Transverse colon (tissue), 4 donors: ENCODE measurements at regions of chr16 and their contacts with region 1.

Region 1: GRCh38 chr16:89217388-89218191 is at the start of gene ZNF778:
- DNase-seq: peak; percentile 86
- H3K4me3 ChIP-seq: peak within 1 kb of the TSS; percentile 42 to 90 (median 76)
- H3K27ac ChIP-seq: peak within 1 kb of the TSS; percentile 95 to 98 (median 97)
- H3K4me1 ChIP-seq: peaks cover 11 to 34% (median 23%) of the 10 kb centered on the region in 4 donors
- H3K27me3 ChIP-seq: no peaks in the 10 kb centered on the region
- CTCF ChIP-seq: peak in 2 of 5 experiments; percentile 1 to 35
- EP300 ChIP-seq: no peak
- POLR2A ChIP-seq: peak; percentile 84
- total RNA-seq, gene ZNF778: 9.3 to 89.0 (median 13.4) TPM

Region 2: DNA sequence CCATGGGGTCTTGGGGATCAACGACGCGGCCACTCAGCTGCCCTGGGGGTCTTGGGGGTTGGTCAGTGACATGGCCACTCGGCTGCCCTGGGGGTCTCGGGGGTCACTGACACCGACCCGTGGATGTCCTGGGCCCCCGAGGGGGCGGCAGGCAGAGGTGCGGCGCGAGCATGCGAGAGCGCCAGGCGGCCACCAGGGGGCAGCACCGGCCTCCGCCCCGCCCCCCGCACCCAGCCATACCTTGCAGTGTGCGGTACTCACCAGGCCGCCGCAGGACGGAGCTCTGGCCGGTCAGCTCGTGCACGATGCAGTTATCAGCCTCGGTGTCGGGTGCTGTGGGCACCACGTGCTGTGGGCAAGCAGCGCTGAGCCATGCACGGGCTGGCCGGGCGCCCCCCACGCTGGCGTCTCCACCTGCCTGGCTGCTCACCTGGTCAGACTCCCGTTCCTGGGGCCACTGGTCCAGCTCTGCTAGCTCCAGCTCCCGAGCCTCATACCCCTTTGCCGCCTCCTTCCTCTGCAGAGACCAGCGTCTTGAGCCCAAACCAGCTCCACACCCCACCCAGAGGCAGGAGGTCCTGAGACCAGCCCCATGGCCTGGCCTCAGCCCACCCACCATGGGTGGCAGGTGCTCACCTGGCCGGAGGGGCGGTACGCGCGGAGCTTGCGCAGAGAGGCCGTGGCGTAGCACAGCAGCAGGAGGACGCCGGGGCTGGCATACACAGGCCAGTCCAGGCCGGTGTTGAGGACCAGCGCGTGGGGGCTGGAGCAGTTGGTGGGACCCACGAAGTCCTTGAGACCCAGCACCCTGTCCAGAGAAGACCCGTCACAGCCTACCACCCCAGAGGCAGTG is 480.1 kb before region 1 on chr16:
- in situ Hi-C with region 1: loop called in 1 of 4 experiments (anchors 25 kb)
- intact Hi-C with region 1: no loop called
- DNase-seq: peak; percentile 78
- H3K4me3 ChIP-seq: no peak overlapping the region
- H3K27ac ChIP-seq: peak overlapping the region in 1 of 4 donors; percentile 30
- H3K4me1 ChIP-seq: peaks cover 0 to 6% (median 3%) of the 10 kb centered on the region in 4 donors
- H3K27me3 ChIP-seq: no peaks in the 10 kb centered on the region
- CTCF ChIP-seq: peak; percentile 98 to 100 (median 99)
- EP300 ChIP-seq: no peak
- POLR2A ChIP-seq: no peak

Region 3: GRCh38 chr16:88811769-88812512 is 405.6 kb before region 1 on chr16 and contains the start of gene APRT:
- in situ Hi-C with region 1: loop called in 1 of 4 experiments (anchors 25 kb)
- intact Hi-C with region 1: no loop called
- DNase-seq: peak; percentile 97
- H3K4me3 ChIP-seq: peak within 1 kb of the TSS; percentile 64 to 94 (median 83)
- H3K27ac ChIP-seq: peak within 1 kb of the TSS; percentile 97 to 99 (median 97)
- H3K4me1 ChIP-seq: peaks cover 12 to 37% (median 32%) of the 10 kb centered on the region in 4 donors
- H3K27me3 ChIP-seq: no peaks in the 10 kb centered on the region
- CTCF ChIP-seq: peak in 4 of 5 experiments; percentile 20 to 51 (median 27)
- EP300 ChIP-seq: no peak
- POLR2A ChIP-seq: peak; percentile 80
- total RNA-seq, gene APRT: 81.6 to 221 (median 149) TPM

Region 4: DNA sequence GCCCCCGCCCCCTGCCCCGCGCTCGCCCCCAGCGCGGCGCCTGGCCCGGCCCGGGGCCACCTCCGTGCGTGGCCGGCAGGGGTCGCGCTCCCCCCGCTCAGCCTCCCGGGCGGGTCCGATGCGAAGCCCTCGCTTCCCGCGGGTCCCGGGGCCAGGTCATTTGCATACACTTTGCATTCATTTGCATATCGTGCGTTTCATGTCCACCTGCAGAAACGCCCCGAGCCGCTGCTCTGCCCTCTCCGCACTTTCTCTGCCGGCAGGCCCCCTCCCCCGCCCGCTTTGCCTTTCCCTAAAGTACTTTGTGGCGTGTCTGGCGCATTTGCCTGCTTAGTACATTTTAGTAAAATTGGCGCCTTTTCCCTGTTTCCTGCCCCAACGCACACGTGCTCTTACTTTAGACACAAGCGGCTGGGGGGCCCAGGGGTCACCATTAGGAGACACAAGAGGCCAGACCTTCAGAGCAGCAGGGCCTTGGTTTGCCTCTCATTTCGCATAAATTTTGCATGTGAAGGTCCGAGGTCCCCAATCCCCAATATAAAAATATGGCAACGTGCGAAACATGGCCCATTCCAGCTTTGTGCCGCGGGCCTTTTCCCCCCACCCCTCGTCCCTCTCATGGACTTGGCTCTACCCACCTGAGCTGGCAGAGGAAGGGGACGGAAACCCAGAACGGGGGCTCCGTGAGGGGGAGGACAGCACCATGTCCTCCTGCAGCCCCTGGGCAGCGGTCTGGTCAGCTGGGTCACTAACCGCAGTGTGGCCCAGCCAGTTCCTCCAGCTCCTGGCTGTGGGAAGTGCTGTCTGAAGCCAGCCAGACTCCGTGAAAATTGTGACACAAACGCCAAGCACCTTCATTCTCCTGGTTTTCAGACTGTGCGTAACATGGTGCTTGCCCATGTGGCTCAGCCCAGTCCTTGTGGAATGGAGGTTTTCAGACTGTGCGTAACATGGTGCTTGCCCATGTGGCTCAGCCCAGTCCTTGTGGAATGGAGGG is 275.4 kb before region 1 on chr16:
- in situ Hi-C with region 1: loop called in 1 of 4 experiments (anchors 25 kb)
- intact Hi-C with region 1: loop called (anchors 5 kb)
- DNase-seq: peak; percentile 69
- H3K4me3 ChIP-seq: peak overlapping the region in 3 of 4 donors; percentile 33 to 52 (median 45)
- H3K27ac ChIP-seq: peak overlapping the region in 1 of 4 donors; percentile 46
- H3K4me1 ChIP-seq: peaks cover 5 to 36% (median 25%) of the 10 kb centered on the region in 4 donors
- H3K27me3 ChIP-seq: peaks cover 75% of the 10 kb centered on the region
- CTCF ChIP-seq: peak; percentile 47 to 70 (median 57)
- EP300 ChIP-seq: no peak
- POLR2A ChIP-seq: no peak